GM12878 (cell line): ENCODE measurements at regions of chr10 and their contacts with region 1.

Region 1: DNA sequence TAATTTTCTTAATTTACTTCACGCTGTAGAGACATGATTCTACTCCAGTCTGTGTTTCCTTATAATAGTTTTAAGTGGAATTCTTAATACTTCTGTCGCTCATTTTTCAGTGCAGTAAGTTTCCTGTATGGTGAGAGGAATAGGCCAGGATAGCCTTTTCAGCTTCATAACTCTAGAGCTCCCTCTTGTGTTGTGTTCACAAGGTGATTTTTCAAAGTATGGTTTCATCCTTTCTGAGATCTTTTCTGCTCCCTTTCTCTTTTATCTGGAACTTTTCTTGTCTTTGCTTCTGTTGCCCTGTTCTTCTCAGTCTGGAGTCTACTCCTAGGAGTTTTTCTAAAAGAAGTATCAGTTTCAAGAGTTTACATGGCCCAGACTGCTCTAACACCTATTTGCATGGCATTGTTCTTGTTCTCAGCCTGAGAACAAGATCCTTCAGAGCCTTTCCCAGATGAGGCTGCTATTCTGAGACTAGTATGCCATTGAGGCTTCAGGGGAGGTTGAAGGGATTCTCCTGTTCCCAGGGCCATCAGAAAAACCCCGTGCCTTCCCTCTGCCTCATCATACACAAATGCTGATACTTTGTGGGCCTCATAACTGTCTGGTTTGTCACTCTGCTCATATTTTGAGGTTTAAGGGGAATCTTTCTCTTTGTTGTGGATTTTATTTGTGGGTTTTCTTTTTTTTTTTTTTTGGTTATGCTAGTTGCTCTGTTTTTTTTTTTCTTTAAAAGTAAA is 21.8 kb downstream of the NET1 start:
- DNase-seq: no peak
- ATAC-seq: peak; percentile 85
- H3K4me3 ChIP-seq: no peak overlapping the region
- H3K27ac ChIP-seq: no peak overlapping the region
- H3K4me1 ChIP-seq: no peaks in the 10 kb centered on the region
- H3K27me3 ChIP-seq: no peaks in the 10 kb centered on the region
- CTCF ChIP-seq: peak; percentile 57 to 70 (median 64); a peak in 5 of 6 replicates
- EP300 ChIP-seq: peak in 1 of 2 experiments; percentile 14; a peak in 1 of 4 replicates
- POLR2A ChIP-seq: no peak
- RAD21 ChIP-seq: peak; percentile 64

Region 2: DNA sequence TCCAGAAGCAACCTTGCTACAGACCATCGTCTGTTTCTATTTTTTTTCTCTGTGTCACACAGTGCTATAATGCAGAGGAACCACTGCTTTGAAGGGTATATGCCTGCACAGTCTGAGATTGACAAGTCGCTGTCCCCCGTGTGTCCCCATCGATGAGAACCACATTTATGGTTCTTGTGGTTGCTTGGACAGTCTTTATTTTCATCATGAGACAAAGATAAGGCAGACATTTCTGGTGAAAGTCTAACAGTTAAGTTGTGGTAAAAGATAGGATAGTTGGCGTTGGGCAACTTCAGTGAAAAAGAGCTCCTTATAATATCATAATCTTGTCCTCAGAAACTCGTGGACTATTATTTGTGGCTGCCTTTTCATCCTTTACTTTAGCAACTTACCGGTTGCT is 614.5 kb before region 1 on chr10:
- CTCF ChIA-PET with region 1: interaction called, 40 read pairs
- POLR2A ChIA-PET with region 1: no interaction called
- RAD21 ChIA-PET with region 1: interaction called, 25 read pairs
- SMC1A ChIA-PET with region 1: interaction called, 31 read pairs
- in situ Hi-C with region 1: no loop called
- intact Hi-C with region 1: loop called (anchors 5 kb)
- DNase-seq: no peak
- ATAC-seq: no peak
- H3K4me3 ChIP-seq: no peak overlapping the region
- H3K27ac ChIP-seq: no peak overlapping the region
- H3K4me1 ChIP-seq: no peaks in the 10 kb centered on the region
- H3K27me3 ChIP-seq: peaks cover 0 to 4% of the 10 kb centered on the region in 2 experiments; a peak in 1 of 4 replicates
- CTCF ChIP-seq: no peak
- EP300 ChIP-seq: no peak
- POLR2A ChIP-seq: no peak
- RAD21 ChIP-seq: no peak

Region 3: GRCh38 chr10:5413012-5413938 is 20.9 kb before region 1 on chr10:
- CTCF ChIA-PET with region 1: interaction called, 26 read pairs
- POLR2A ChIA-PET with region 1: no interaction called
- RAD21 ChIA-PET with region 1: interaction called, 5 read pairs
- SMC1A ChIA-PET with region 1: interaction called, 4 read pairs
- in situ Hi-C with region 1: no loop called
- intact Hi-C with region 1: no loop called
- DNase-seq: no peak
- ATAC-seq: peak; percentile 11
- H3K4me3 ChIP-seq: peak overlapping the region; percentile 68
- H3K27ac ChIP-seq: no peak overlapping the region; the same call in 1 of the 2 replicates
- H3K4me1 ChIP-seq: no peaks in the 10 kb centered on the region
- H3K27me3 ChIP-seq: peaks cover 0 to 4% of the 10 kb centered on the region in 2 experiments; a peak in 1 of 4 replicates
- CTCF ChIP-seq: no peak
- EP300 ChIP-seq: no peak
- POLR2A ChIP-seq: no peak
- RAD21 ChIP-seq: no peak

Region 4: GRCh38 chr10:5446390-5446926 is 12.3 kb after region 1 on chr10:
- CTCF ChIA-PET with region 1: interaction called, 30 read pairs
- POLR2A ChIA-PET with region 1: no interaction called
- RAD21 ChIA-PET with region 1: interaction called, 4 read pairs
- SMC1A ChIA-PET with region 1: interaction called, 33 read pairs
- in situ Hi-C with region 1: no loop called
- intact Hi-C with region 1: no loop called
- DNase-seq: no peak
- ATAC-seq: no peak
- H3K4me3 ChIP-seq: peak overlapping the region; percentile 18; the same call in 1 of the 2 replicates
- H3K27ac ChIP-seq: no peak overlapping the region
- H3K4me1 ChIP-seq: peaks cover 42% of the 10 kb centered on the region
- H3K27me3 ChIP-seq: no peaks in the 10 kb centered on the region
- CTCF ChIP-seq: no peak
- EP300 ChIP-seq: no peak
- POLR2A ChIP-seq: peak; percentile 87
- RAD21 ChIP-seq: no peak

Region 5: GRCh38 chr10:5566578-5566973 is 132.4 kb after region 1 on chr10:
- CTCF ChIA-PET with region 1: no interaction called
- POLR2A ChIA-PET with region 1: no interaction called
- RAD21 ChIA-PET with region 1: no interaction called
- SMC1A ChIA-PET with region 1: no interaction called
- in situ Hi-C with region 1: no loop called
- intact Hi-C with region 1: no loop called
- DNase-seq: no peak
- ATAC-seq: no peak
- H3K4me3 ChIP-seq: no peak overlapping the region
- H3K27ac ChIP-seq: no peak overlapping the region
- H3K4me1 ChIP-seq: no peaks in the 10 kb centered on the region
- H3K27me3 ChIP-seq: peaks cover 7 to 10% of the 10 kb centered on the region in 2 experiments
- CTCF ChIP-seq: no peak
- EP300 ChIP-seq: no peak
- POLR2A ChIP-seq: no peak
- RAD21 ChIP-seq: no peak

Region 6: DNA sequence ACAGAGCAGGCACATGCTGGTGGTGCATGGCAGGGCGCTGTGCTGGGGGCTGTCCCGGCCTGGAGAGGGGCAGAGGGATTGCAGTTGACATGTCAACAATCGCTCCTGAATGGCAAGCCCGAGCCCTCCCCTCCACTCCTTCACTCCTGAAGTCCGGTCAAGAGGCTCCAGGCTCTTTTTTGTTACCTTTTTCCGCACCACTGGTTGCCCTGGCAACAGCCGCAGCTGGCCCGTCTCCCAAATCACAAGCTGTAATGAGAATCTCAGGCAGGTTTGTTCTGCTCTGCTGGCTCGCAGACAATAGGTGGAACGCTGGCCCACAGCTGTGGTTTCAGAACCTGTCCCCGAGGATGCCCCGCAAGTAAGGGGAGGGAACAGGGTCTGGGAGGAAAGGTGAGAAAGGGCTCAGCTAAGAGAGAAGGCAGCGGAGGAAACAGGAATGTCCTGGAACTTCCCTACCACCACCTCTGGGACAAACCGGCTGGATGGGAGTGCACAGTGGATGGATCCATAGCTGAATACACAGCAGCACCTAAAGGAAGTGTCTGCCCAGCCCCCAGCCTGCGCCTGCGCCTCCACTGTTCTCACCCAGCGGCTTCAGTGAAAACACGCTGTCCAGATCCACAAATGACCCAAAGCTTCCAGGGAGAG is 149.5 kb after region 1 on chr10:
- CTCF ChIA-PET with region 1: interaction called, 10 read pairs
- POLR2A ChIA-PET with region 1: no interaction called
- RAD21 ChIA-PET with region 1: no interaction called
- SMC1A ChIA-PET with region 1: no interaction called
- in situ Hi-C with region 1: no loop called
- intact Hi-C with region 1: no loop called
- DNase-seq: peak; percentile 37
- ATAC-seq: peak; percentile 73
- H3K4me3 ChIP-seq: 0 out of 2 replicates have a peak overlapping the region, but pooled peaks have one; percentile 3
- H3K27ac ChIP-seq: peak overlapping the region; percentile 28
- H3K4me1 ChIP-seq: peaks cover 51% of the 10 kb centered on the region
- H3K27me3 ChIP-seq: peaks cover 0 to 1% of the 10 kb centered on the region in 2 experiments; a peak in 2 of 4 replicates
- CTCF ChIP-seq: no peak
- EP300 ChIP-seq: peak; percentile 66 to 67; a peak in 3 of 4 replicates
- POLR2A ChIP-seq: no peak
- RAD21 ChIP-seq: no peak

Region 7: GRCh38 chr10:5854106-5854570 is 420.0 kb after region 1 on chr10:
- CTCF ChIA-PET with region 1: no interaction called
- POLR2A ChIA-PET with region 1: interaction called, 10 read pairs
- RAD21 ChIA-PET with region 1: no interaction called
- SMC1A ChIA-PET with region 1: no interaction called
- in situ Hi-C with region 1: no loop called
- intact Hi-C with region 1: no loop called
- DNase-seq: no peak
- ATAC-seq: no peak
- H3K4me3 ChIP-seq: no peak overlapping the region
- H3K27ac ChIP-seq: no peak overlapping the region
- H3K4me1 ChIP-seq: peaks cover 8% of the 10 kb centered on the region
- H3K27me3 ChIP-seq: no peaks in the 10 kb centered on the region; a peak in 1 of 4 replicates
- CTCF ChIP-seq: no peak
- EP300 ChIP-seq: no peak
- POLR2A ChIP-seq: no peak
- RAD21 ChIP-seq: no peak